Cardiac septum (tissue), 1 donor: ENCODE measurements at regions of chrX and their contacts with region 1.

Region 1: GRCh38 chrX:31279359-31279758 is 207.5 kb upstream of the FTHL17 start:
- DNase-seq: no peak

Region 2: GRCh38 chrX:31423609-31424189 is 144.3 kb after region 1 on chrX:
- intact Hi-C with region 1: loop called (anchors 10 kb)
- DNase-seq: no peak